PC-3 (cell line): ENCODE measurements at regions of chr10 and their contacts with region 1.

Region 1: DNA sequence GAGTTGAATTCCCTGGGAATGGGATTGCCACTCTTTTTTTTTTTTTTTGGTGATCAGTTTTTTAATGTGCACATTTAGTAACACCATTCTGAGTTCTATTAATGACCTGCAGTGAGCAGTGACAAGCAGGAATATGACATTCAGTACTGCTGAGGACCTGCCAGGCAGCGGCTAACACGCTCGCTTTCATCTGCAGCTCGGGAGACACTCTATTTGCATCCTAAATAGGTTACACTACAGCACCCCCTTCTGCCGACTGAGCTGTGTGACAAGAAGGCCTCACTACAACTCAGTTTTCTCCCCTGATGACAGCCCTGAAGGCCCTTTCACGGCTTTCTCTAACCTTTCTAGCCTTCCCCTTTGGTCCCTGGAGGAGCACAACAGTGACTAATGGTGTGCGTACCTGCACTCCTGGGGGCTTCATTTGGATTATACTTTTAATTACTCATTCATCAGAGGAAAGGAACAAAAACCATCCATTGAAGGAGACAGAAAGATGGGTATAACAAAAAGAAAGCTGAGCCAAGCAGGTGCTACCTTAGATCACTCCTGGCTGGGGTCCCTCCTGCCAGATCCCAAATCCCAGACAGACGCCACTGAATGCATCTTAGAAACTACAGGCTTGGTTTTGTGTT is 872.4 kb downstream of the LRMDA start:
- DNase-seq: peak; percentile 98
- ATAC-seq: peak; percentile 98
- H3K4me3 ChIP-seq: no peak overlapping the region
- H3K27ac ChIP-seq: no peak overlapping the region
- H3K4me1 ChIP-seq: peaks cover 4% of the 10 kb centered on the region; the same call in 1 of the 2 replicates
- H3K27me3 ChIP-seq: peaks cover 13% of the 10 kb centered on the region; the same call in 1 of the 2 replicates
- CTCF ChIP-seq: peak; percentile 100

Region 2: GRCh38 chr10:75623310-75624093 is 680.3 kb before region 1 on chr10:
- CTCF ChIA-PET with region 1: no interaction called
- POLR2A ChIA-PET with region 1: no interaction called
- intact Hi-C with region 1: loop called (anchors 2 kb)
- DNase-seq: no peak
- ATAC-seq: no peak
- H3K4me3 ChIP-seq: no peak overlapping the region
- H3K27ac ChIP-seq: no peak overlapping the region
- H3K4me1 ChIP-seq: no peaks in the 10 kb centered on the region
- H3K27me3 ChIP-seq: peaks cover 42% of the 10 kb centered on the region
- CTCF ChIP-seq: no peak

Region 3: DNA sequence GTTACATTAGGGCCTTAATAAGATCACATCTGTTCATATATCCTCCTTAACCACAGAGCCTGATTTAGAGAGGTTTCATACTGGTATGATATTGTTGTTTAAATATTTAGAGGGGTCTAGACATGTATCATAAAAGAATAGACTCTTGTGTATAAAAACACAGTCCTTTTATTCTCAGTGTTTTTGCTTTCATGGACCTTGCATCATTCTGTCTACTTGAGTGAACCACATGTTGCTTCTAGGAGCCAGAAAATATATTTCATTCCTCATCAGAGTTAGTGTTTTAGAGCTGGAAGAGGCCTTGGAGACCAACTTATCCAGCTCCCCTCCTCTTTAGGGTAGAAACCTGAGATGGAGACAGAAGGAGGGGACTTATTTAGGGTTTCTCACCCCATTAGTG is 559.5 kb before region 1 on chr10:
- CTCF ChIA-PET with region 1: no interaction called
- POLR2A ChIA-PET with region 1: no interaction called
- intact Hi-C with region 1: no loop called
- DNase-seq: no peak
- ATAC-seq: no peak
- H3K4me3 ChIP-seq: no peak overlapping the region
- H3K27ac ChIP-seq: no peak overlapping the region
- H3K4me1 ChIP-seq: no peaks in the 10 kb centered on the region
- H3K27me3 ChIP-seq: peaks cover 67% of the 10 kb centered on the region
- CTCF ChIP-seq: no peak

Region 4: GRCh38 chr10:75772153-75772887 is 531.5 kb before region 1 on chr10:
- CTCF ChIA-PET with region 1: no interaction called
- POLR2A ChIA-PET with region 1: no interaction called
- intact Hi-C with region 1: loop called (anchors 2 kb)
- DNase-seq: peak; percentile 68
- ATAC-seq: no peak
- H3K4me3 ChIP-seq: peak overlapping the region; percentile 52
- H3K27ac ChIP-seq: peak overlapping the region; percentile 76
- H3K4me1 ChIP-seq: peaks cover 48% of the 10 kb centered on the region
- H3K27me3 ChIP-seq: peaks cover 17% of the 10 kb centered on the region; the same call in 1 of the 2 replicates
- CTCF ChIP-seq: no peak

Region 5: DNA sequence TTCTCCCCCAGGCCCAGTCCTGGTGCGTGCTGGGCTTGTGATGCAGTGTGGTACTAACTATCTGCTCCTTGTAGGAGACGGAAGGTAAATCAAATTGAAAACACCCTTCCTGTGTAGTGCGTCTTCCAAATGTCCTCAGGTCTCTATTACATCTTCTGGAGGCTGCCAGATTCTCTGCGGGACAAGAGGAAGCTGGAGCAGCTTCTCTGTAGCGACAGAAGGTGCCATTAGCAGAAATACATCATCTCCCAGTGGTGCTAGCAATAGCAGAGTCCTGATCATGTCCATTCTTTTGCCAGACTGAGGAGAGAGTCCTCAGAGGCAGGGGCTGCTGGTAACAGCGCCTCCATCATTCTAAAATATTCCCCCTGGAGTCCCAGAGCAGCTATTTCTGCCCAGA is 197.2 kb before region 1 on chr10:
- CTCF ChIA-PET with region 1: no interaction called
- POLR2A ChIA-PET with region 1: no interaction called
- intact Hi-C with region 1: loop called (anchors 2 kb)
- DNase-seq: no peak
- ATAC-seq: no peak
- H3K4me3 ChIP-seq: no peak overlapping the region
- H3K27ac ChIP-seq: no peak overlapping the region
- H3K4me1 ChIP-seq: peaks cover 8% of the 10 kb centered on the region; the same call in 1 of the 2 replicates
- H3K27me3 ChIP-seq: peaks cover 54% of the 10 kb centered on the region
- CTCF ChIP-seq: no peak

Region 6: DNA sequence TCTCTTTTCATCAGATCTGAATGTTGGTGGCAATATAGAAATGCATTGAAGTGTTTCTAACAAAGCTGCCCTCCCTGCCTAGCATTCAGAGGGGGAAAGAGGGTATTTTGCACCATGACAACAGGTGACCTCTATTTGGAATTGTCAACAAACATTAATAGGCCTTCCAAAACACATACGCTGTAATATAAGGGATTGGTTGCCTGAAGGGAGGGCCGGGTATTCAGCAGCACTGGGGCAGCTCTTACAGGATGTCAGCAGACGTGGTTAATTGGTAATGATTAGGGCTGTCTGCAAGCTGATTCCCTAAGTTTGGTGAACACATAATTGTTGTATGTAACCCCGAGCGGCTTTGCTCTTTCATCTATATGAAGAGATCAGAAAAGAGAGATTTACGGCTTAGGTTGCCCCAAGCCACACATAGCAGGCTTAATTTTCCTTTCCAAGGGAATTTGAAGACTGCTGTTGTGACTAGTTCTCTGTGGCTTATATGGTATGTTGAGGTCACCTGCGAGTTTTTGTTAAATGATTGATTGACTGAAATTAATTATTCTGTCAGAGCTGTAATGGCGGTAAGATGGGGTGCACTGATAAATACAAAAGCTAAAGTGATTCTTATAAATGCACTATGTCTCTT is 113.0 kb before region 1 on chr10:
- CTCF ChIA-PET with region 1: interaction called, 4 read pairs
- POLR2A ChIA-PET with region 1: no interaction called
- intact Hi-C with region 1: loop called (anchors 1 kb)
- DNase-seq: no peak
- ATAC-seq: no peak
- H3K4me3 ChIP-seq: no peak overlapping the region
- H3K27ac ChIP-seq: no peak overlapping the region
- H3K4me1 ChIP-seq: no peaks in the 10 kb centered on the region
- H3K27me3 ChIP-seq: peaks cover 90% of the 10 kb centered on the region
- CTCF ChIP-seq: no peak

Region 7: DNA sequence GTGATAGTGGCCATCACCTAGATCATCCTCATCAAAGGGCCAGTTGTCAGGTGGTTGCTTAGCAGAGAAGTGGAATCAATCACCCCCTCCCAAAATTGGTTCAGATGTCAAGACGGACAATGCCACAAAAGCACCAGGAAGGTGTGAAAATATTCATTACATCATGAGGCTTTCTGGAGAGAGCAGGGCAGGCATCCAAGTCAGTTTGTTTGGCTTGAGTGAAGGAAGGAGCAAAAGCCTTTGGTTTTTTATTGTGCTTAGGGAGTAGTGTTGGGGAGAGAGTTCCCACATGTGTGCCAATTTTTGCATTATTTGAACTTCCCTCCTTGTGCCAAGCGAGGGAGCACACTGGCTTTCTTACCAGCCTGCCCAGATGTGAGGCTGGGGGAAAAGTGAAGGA is 210.5 kb after region 1 on chr10:
- CTCF ChIA-PET with region 1: no interaction called
- POLR2A ChIA-PET with region 1: no interaction called
- intact Hi-C with region 1: no loop called
- DNase-seq: no peak
- ATAC-seq: no peak
- H3K4me3 ChIP-seq: no peak overlapping the region
- H3K27ac ChIP-seq: no peak overlapping the region
- H3K4me1 ChIP-seq: no peaks in the 10 kb centered on the region
- H3K27me3 ChIP-seq: peaks cover 29% of the 10 kb centered on the region
- CTCF ChIP-seq: no peak

Region 8: DNA sequence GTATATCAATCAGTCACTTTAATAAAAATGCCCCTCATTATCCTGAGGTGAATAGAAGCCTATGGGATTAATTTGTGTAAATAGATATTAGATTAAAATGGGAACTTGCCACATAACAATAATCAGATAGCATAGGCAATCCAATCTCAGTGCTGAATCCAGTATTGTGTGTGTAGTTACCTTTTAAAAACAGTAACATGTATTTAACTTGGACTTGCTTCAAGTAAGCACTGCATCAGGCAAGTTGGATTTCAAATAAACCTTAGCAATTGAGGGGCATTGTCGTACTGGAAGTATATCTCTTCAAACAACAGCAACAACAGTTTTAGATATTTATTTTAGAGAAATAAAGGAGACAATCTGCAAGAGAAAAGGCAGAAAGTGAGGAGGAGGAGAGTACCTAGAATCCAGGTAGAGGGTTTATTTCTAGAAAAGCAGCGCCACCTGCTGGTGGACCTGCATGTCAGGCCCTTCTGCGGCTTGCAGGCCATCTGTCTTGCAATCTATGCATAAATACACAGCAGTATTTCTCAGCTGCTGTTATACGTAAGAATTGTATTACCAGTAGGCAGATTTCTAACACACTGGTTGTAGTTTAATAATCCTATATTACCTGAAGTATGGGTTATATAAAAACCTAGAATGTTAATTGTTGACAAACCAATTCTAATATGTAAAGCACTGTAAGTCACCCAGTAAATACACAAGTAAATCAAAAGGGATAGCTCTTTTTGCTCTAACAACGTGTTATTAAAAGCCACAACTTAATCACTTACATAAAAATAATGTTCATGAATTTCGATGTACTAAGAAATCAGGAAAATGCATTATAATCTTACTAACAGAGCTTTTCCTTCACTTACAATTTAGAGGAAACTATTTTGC is 681.0 kb after region 1 on chr10:
- CTCF ChIA-PET with region 1: interaction called, 3 read pairs
- POLR2A ChIA-PET with region 1: no interaction called
- intact Hi-C with region 1: loop called (anchors 2 kb)
- DNase-seq: peak; percentile 100
- ATAC-seq: peak; percentile 95
- H3K4me3 ChIP-seq: no peak overlapping the region
- H3K27ac ChIP-seq: no peak overlapping the region
- H3K4me1 ChIP-seq: peaks cover 18% of the 10 kb centered on the region
- H3K27me3 ChIP-seq: no peaks in the 10 kb centered on the region
- CTCF ChIP-seq: peak; percentile 100